Esophagus muscularis mucosa (tissue), 4 donors: ENCODE measurements at regions of chr2 and their contacts with region 1.

Region 1: GRCh38 chr2:67846370-67847070 is 216.3 kb downstream of the C1D start:
- DNase-seq: peak; percentile 97
- H3K4me3 ChIP-seq: peak overlapping the region in 3 of 4 donors; percentile 12 to 33 (median 14)
- H3K27ac ChIP-seq: peak overlapping the region; percentile 48 to 75 (median 72)
- H3K4me1 ChIP-seq: peaks cover 9 to 25% (median 14%) of the 10 kb centered on the region in 4 donors
- H3K27me3 ChIP-seq: no peaks in the 10 kb centered on the region
- CTCF ChIP-seq: peak; percentile 84 to 90 (median 84)
- EP300 ChIP-seq: no peak
- POLR2A ChIP-seq: no peak

Region 2: GRCh38 chr2:67671464-67672450 is 174.8 kb before region 1 on chr2:
- intact Hi-C with region 1: loop called (anchors 5 kb)
- DNase-seq: no peak
- H3K4me3 ChIP-seq: no peak overlapping the region
- H3K27ac ChIP-seq: no peak overlapping the region
- H3K4me1 ChIP-seq: peaks cover 13 to 25% (median 19%) of the 10 kb centered on the region in 4 donors
- H3K27me3 ChIP-seq: no peaks in the 10 kb centered on the region
- CTCF ChIP-seq: no peak
- EP300 ChIP-seq: no peak
- POLR2A ChIP-seq: no peak